Activated CD8-positive, alpha-beta T cell treated with anti-CD3 and anti-CD28 coated beads for 36 hours (primary cell): ENCODE measurements at regions of chr1 and their contacts with region 1.

Region 1: DNA sequence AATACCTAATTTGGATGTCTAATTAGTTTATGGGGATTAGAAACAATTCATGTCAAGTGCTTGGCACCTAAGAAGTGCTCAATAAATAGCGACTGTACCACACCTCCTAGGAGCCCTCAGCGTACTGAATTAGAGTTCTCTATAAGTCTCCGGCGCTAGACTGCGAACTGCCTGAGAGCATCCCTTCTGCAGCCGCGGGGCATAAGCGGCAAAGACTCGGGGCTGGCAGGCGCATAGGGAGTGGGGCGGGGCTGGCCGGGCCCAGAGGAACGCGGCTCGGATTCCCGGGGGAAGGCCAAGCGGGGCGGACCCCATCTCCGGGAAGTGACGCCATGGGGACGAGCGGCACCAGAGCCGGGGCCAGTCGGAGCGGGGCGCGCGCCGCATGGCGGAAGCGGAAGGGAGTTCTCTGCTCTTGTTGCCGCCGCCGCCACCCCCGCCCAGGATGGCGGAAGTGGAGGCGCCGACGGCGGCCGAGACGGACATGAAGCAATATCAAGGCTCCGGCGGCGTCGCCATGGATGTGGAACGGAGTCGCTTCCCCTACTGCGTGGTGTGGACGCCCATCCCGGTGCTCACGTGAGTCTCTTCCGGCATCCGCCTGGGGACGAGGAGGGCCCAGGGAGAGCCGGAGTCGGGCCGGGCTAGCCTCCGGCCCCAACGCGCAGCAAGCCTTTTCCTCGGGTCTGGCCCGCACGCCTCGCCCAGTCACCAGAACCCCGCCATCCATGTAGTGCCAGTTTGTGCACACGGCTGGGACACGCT is at the start of gene TMEM222:
- DNase-seq: peak; percentile 97
- ATAC-seq: peak; percentile 98
- H3K4me3 Mint-ChIP-seq: peak within 1 kb of the TSS; percentile 95
- H3K27ac Mint-ChIP-seq: peak within 1 kb of the TSS; percentile 95
- H3K4me1 Mint-ChIP-seq: peaks cover 39% of the 10 kb centered on the region
- H3K27me3 Mint-ChIP-seq: no peaks in the 10 kb centered on the region
- CTCF ChIP-seq: no peak
- total RNA-seq, gene TMEM222: 22.0 to 25.4 TPM

Region 2: GRCh38 chr1:27341525-27342252 is 19.7 kb after region 1 on chr1 and contains the start of gene SYTL1:
- CTCF ChIA-PET with region 1: interaction called, 14 read pairs
- POLR2A ChIA-PET with region 1: interaction called, 13 read pairs
- intact Hi-C with region 1: no loop called
- DNase-seq: peak; percentile 85
- ATAC-seq: peak; percentile 70
- H3K4me3 Mint-ChIP-seq: peak within 1 kb of the TSS; percentile 84
- H3K27ac Mint-ChIP-seq: peak within 1 kb of the TSS; percentile 89
- H3K4me1 Mint-ChIP-seq: peaks cover 39% of the 10 kb centered on the region
- H3K27me3 Mint-ChIP-seq: no peaks in the 10 kb centered on the region
- CTCF ChIP-seq: no peak
- total RNA-seq, gene SYTL1: 77.7 to 80.6 TPM